ENCODE measurements at regions of chr1 and their contacts with region 1.

Region 1: GRCh38 chr1:229759038-229759436 is 133.0 kb downstream of the URB2 start:
- DNase-seq: no peak
- H3K4me3 Mint-ChIP-seq: no peak overlapping the region
- H3K27ac Mint-ChIP-seq: no peak overlapping the region
- H3K4me1 Mint-ChIP-seq: peaks cover 21% of the 10 kb centered on the region
- H3K27me3 Mint-ChIP-seq: peaks cover 14% of the 10 kb centered on the region

Region 2: GRCh38 chr1:229736376-229736775 is 22.7 kb before region 1 on chr1:
- intact Hi-C with region 1: loop called (anchors 2 kb)
- DNase-seq: no peak
- H3K4me3 Mint-ChIP-seq: no peak overlapping the region
- H3K27ac Mint-ChIP-seq: no peak overlapping the region
- H3K4me1 Mint-ChIP-seq: peaks cover 9% of the 10 kb centered on the region
- H3K27me3 Mint-ChIP-seq: peaks cover 4% of the 10 kb centered on the region

Measured in activated T-helper 2 cell treated with anti-CD3 and anti-CD28 coated beads, Interferon-gamma antibody, Interleukin-2, Interleukin-4, amounts not matched to agents 10 μg/mL and 5 μg/mL and 100 μg/mL, durations not matched to agents 14 hours and 24 hours and 36 hours (primary cell).